Mammary epithelial cell (primary cell): ENCODE measurements at regions of chr12 and their contacts with region 1.

Region 1: GRCh38 chr12:21341769-21342168 is 7.1 kb upstream of the SLCO1A2 start:
- DNase-seq: no peak
- H3K4me3 ChIP-seq: no peak overlapping the region
- H3K27ac ChIP-seq: no peak overlapping the region
- H3K4me1 ChIP-seq: no peaks in the 10 kb centered on the region
- H3K27me3 ChIP-seq: no peaks in the 10 kb centered on the region
- CTCF ChIP-seq: no peak

Region 2: DNA sequence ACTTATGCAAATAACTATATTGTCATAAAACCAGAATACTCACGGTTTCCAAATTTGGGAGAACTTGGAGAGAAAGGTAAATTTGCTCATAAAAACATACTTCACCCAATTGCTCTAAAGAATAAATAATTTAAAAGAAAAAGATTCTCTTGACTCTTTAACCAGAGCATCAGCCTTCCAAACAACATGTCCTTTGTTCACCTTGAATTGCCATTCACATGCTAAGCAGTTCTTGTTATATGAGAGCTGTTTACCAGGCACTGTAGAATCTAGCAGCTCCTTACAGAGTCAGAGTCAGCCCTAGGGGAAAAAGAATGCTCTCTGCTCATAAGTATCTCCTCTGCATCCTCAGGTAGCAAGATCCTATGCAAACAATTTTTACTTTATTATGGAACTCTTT is 17.2 kb before region 1 on chr12:
- CTCF ChIA-PET with region 1: no interaction called
- dilution Hi-C with region 1: no loop called
- in situ Hi-C with region 1: no loop called
- intact Hi-C with region 1: no loop called
- DNase-seq: no peak
- H3K4me3 ChIP-seq: no peak overlapping the region
- H3K27ac ChIP-seq: no peak overlapping the region
- H3K4me1 ChIP-seq: no peaks in the 10 kb centered on the region
- H3K27me3 ChIP-seq: no peaks in the 10 kb centered on the region
- CTCF ChIP-seq: no peak

Region 3: GRCh38 chr12:21370845-21371449 is 29.2 kb after region 1 on chr12:
- CTCF ChIA-PET with region 1: no interaction called
- dilution Hi-C with region 1: no loop called
- in situ Hi-C with region 1: no loop called
- intact Hi-C with region 1: no loop called
- DNase-seq: no peak
- H3K4me3 ChIP-seq: no peak overlapping the region
- H3K27ac ChIP-seq: no peak overlapping the region
- H3K4me1 ChIP-seq: no peaks in the 10 kb centered on the region
- H3K27me3 ChIP-seq: no peaks in the 10 kb centered on the region
- CTCF ChIP-seq: no peak

Region 4: GRCh38 chr12:21657326-21658077 is 315.7 kb after region 1 on chr12 and contains the start of gene LDHB:
- CTCF ChIA-PET with region 1: no interaction called
- dilution Hi-C with region 1: no loop called
- in situ Hi-C with region 1: no loop called
- intact Hi-C with region 1: loop called (anchors 2 kb)
- DNase-seq: peak; percentile 83
- H3K4me3 ChIP-seq: peak within 1 kb of the TSS; percentile 86 to 97 (median 96)
- H3K27ac ChIP-seq: peak within 1 kb of the TSS; percentile 69
- H3K4me1 ChIP-seq: peaks cover 6% of the 10 kb centered on the region
- H3K27me3 ChIP-seq: no peaks in the 10 kb centered on the region
- CTCF ChIP-seq: no peak
- total RNA-seq, gene LDHB: 257 to 513 TPM